HEK293T (cell line): ENCODE measurements at regions of chr15 and their contacts with region 1.

Region 1: DNA sequence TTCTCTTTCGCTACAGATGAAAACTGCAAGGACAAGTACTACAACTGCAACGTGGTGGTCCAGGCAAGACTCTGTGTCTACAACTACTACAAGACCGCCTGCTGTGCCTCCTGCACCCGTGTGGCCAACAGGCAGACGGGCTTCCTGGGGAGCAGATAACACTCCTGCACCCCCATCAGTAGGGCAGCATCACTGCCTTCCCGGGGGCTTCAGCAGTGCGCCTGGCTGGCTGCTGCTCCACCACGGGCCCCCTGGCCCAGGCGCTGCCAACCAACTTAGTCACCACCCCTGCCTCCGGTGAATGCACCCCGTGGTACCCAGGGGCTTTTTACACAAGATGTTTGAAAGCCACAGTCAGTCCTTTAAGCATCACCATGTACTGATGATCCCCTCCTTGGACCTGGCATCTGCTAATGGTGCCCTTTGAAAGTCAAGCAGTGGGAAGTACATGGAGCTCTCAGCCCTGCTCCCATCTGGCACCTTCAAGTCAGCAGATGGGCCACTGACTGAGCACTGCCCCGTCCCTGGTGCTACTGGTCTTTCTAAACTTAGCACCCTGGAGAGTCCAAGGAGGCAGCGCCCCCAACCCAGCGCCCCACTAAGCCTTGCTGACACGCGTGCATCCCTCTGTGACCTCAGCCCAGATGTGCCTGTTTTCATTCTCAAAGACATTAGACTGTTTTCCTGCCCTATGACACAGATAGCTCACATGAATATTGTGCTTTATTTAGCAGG is 33.0 kb upstream of the NR2E3 start:
- DNase-seq: no peak

Region 2: DNA sequence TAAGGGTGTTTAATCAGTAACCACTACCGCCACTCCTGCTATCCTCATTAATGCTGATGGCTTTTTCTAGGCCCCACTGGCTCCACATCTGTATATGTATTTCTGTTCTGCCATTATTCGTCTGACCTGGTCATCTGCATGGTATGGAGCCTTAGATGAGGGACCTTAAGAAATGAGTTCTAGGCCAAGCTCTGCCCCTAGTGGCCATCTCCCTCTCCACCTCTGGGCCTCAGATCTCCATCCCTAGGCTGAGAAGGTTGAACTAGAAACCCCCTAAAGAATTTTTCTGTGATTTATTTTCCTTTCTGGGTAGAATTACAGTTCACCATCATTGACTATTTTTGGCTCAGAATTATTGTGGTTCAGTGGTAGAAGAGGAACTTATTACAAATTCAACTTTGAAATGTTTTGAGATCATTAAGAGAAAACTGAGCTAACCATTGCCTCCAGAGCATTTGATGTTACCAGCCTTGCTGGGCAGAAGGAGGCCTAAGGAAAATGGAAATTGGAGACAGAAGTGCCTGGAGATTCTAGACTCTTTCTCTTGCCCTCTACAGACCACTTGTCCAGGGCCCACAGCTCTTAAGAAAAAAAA is 292.2 kb before region 1 on chr15:
- CTCF ChIA-PET with region 1: interaction called, 12 read pairs
- POLR2A ChIA-PET with region 1: no interaction called
- DNase-seq: peak; percentile 48

Region 3: DNA sequence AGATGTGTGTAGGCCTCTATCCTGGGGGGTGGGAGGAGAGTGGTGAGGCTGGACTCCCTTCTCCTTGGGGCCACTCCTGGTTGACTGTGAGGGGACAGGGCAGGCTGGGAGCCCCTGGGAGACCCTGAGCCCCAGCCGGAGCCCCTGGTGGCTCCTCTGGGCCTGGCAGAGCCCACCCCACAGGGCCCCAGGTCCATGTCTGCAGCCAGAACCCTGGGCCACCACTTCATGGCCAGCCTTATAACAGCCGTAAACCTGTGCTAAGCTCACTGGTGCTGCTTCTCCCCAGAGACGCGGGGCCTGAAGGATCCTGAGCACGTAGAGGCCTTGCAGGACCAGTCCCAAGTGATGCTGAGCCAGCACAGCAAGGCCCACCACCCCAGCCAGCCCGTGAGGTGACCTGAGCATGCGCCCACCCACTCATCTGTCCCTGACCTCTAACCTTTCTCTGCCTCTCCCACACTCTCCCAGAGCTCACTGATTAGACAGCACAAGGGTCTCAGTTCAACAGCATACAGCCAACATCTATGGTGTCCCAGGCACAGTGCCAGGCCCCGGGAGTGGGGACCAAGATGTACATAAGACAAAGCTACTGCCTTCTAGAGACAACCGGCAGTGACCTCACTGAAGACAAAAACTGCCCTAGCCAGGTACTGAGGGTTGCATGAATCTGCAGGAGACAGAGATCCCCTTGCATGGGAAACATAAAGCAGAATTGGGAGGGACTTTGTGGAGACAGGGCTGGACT is 36.5 kb after region 1 on chr15:
- CTCF ChIA-PET with region 1: no interaction called
- POLR2A ChIA-PET with region 1: no interaction called
- DNase-seq: no peak

Region 4: GRCh38 chr15:71841563-71841962 is 64.2 kb after region 1 on chr15:
- CTCF ChIA-PET with region 1: no interaction called
- POLR2A ChIA-PET with region 1: no interaction called
- DNase-seq: no peak

Region 5: DNA sequence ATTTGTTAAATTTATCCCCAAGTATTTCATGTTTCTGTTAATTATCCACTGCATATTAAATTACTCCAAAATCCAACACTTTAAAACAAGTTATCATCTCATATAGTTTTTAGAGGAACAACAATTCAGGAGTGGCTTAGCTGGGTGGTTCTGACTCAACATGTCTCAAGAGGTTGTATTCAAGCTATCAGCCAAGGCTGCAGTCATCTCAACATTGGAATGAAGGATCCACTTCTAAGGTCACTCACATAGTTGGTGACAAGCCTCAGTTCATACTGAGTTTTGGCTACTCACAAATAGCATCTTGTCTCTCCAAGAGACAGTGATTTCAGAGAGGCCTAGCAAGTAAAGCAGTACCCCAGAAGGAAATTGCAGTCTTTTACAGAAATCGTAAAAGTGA is 167.6 kb after region 1 on chr15:
- CTCF ChIA-PET with region 1: no interaction called
- POLR2A ChIA-PET with region 1: no interaction called
- DNase-seq: no peak

Region 6: DNA sequence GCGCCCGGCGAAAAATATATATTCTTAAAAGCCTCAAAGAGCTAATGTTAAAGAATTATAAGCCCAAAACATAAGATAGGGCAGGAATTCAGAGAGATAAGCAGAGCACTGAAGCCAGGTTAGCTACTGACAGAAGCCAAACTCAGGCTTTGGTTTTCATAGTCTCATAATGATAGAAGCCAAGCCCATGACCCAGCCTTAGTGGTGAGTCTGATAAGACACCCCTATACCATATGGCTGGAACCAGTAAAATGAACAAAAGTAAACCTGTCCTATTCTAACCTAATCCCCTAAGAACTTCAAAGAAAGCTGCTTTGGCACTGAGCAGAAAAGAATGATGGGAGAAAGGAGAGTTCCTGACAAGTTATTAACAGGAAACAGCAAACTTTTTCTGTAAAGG is 314.6 kb after region 1 on chr15:
- CTCF ChIA-PET with region 1: no interaction called
- POLR2A ChIA-PET with region 1: no interaction called
- DNase-seq: no peak